Activated T-helper 1 cell treated with anti-CD3 and anti-CD28 coated beads, Interleukin-12 subunit alpha, Interleukin-12 subunit beta, Interleukin-2, Interleukin-4 antibody, amounts not matched to agents 30 ng/mL and 10 ng/mL and 1 ng/mL, durations not matched to agents 14 hours and 24 hours and 36 hours (primary cell): ENCODE measurements at regions of chr3 and their contacts with region 1.

Region 1: GRCh38 chr3:14947886-14948555 is 638 bp downstream of the NR2C2 start:
- DNase-seq: peak; percentile 95
- H3K4me3 Mint-ChIP-seq: peak overlapping the region; percentile 97
- H3K27ac Mint-ChIP-seq: peak overlapping the region; percentile 100
- H3K4me1 Mint-ChIP-seq: peaks cover 36% of the 10 kb centered on the region
- H3K27me3 Mint-ChIP-seq: no peaks in the 10 kb centered on the region

Region 2: GRCh38 chr3:14124615-14125190 is 823.3 kb before region 1 on chr3 and contains the starts of genes CHCHD4 and TMEM43:
- intact Hi-C with region 1: loop called (anchors 1 kb)
- DNase-seq: peak; percentile 98
- H3K4me3 Mint-ChIP-seq: peak within 1 kb of the TSS; percentile 93
- H3K27ac Mint-ChIP-seq: peak within 1 kb of the TSS; percentile 96
- H3K4me1 Mint-ChIP-seq: peaks cover 67% of the 10 kb centered on the region
- H3K27me3 Mint-ChIP-seq: no peaks in the 10 kb centered on the region
- total RNA-seq, gene CHCHD4: 27.8 and 29.4 TPM in 2 replicates
- total RNA-seq, gene TMEM43: 40.4 and 41.3 TPM in 2 replicates

Region 3: DNA sequence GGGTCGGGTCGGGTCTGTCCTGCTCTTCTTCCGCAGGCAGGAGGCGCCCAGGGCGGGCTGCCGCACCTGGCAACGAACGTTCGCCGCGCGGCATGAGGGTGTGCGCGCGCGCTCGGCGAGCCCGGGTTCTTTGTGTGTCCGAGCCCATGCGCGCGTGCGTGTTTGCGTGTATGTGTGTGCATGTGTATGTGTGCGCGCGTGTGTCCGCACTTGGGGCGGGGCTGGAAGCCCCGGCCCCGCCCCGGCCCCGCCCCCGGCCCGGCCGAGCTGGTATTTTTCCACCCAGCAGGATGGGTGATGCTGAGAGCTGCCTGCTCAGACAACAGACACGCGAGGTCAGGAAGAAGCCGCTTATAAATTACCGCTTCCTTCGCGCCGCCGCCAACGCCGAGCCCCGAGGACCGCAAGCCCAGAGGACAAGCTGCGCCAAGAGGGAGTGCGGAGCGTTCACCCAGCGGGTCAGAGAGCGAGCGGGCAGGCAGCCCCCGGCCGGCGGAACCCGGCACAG is 545.7 kb before region 1 on chr3 and contains the start of gene SLC6A6:
- intact Hi-C with region 1: loop called (anchors 1 kb)
- DNase-seq: peak; percentile 92
- H3K4me3 Mint-ChIP-seq: peak within 1 kb of the TSS; percentile 97
- H3K27ac Mint-ChIP-seq: peak within 1 kb of the TSS; percentile 96
- H3K4me1 Mint-ChIP-seq: peaks cover 42% of the 10 kb centered on the region
- H3K27me3 Mint-ChIP-seq: peaks cover 3% of the 10 kb centered on the region
- total RNA-seq, gene SLC6A6: 45.4 and 51.2 TPM in 2 replicates

Region 4: DNA sequence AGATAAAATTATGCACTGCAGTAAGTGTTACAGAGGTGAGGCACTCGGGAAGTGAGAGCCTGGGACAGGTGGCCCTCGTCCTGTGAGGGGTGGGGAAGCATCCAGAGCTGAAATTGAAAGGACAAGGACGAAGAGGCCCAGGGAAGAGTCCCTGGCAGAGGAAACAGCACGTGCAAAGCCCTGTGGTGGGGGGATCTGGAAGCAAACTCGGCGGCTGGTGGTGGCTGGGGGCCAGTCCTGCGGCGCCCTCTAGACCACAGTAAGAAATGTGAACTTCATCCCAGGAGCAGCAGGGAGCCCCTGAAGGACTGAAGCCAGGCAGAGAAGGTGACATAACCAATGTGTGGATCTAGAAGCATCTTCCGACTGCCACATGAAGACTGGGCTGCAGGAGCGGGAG is 450.7 kb before region 1 on chr3:
- intact Hi-C with region 1: no loop called
- DNase-seq: no peak
- H3K4me3 Mint-ChIP-seq: no peak overlapping the region
- H3K27ac Mint-ChIP-seq: no peak overlapping the region
- H3K4me1 Mint-ChIP-seq: no peaks in the 10 kb centered on the region
- H3K27me3 Mint-ChIP-seq: peaks cover 4% of the 10 kb centered on the region

Region 5: DNA sequence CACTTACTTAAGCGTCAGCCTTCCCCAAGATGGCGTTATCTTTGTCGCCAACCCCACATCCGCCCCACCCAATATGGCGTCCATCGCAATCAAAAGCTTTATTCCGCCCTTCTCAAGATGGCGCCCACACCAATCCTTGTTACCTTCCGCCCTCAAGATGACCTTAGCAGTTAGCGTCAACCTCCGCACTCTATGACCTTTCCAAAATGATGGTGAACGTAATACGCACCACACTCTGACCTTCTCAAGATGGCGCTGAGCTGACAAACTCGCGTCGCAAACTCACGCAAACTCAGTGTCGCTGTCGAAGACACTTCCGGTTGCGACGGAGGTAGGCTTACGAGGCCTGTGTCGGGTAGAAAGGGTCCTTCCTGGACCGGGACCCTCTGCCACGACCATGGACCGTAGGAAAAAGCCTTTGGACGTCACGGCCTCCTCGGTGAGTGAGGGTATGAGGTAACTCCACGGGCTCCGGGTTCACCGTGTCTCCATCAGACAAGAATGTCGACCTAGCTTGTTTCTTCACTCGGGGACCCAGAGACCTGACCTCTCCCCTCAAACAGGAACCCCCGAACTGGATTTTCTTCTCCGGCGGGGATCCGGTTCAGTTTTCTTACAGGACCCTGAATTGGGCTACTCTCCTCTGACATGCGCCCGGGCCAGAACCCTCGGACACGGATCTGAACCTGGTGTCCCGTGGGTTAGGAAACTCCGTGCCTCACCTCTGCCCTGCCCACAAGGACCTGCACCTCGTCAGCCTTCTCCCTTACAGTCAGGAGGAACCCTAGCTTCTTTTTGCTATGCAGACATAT is 296.4 kb before region 1 on chr3 and contains the start of gene CCDC174:
- intact Hi-C with region 1: loop called (anchors 1 kb)
- DNase-seq: peak; percentile 94
- H3K4me3 Mint-ChIP-seq: peak within 1 kb of the TSS; percentile 99
- H3K27ac Mint-ChIP-seq: peak within 1 kb of the TSS; percentile 90
- H3K4me1 Mint-ChIP-seq: peaks cover 38% of the 10 kb centered on the region
- H3K27me3 Mint-ChIP-seq: peaks cover 4% of the 10 kb centered on the region
- total RNA-seq, gene CCDC174: 16.6 and 21.7 TPM in 2 replicates

Region 6: GRCh38 chr3:15023249-15023648 is 75.2 kb after region 1 on chr3:
- intact Hi-C with region 1: no loop called
- DNase-seq: no peak
- H3K4me3 Mint-ChIP-seq: no peak overlapping the region
- H3K27ac Mint-ChIP-seq: no peak overlapping the region
- H3K4me1 Mint-ChIP-seq: no peaks in the 10 kb centered on the region
- H3K27me3 Mint-ChIP-seq: no peaks in the 10 kb centered on the region

Region 7: DNA sequence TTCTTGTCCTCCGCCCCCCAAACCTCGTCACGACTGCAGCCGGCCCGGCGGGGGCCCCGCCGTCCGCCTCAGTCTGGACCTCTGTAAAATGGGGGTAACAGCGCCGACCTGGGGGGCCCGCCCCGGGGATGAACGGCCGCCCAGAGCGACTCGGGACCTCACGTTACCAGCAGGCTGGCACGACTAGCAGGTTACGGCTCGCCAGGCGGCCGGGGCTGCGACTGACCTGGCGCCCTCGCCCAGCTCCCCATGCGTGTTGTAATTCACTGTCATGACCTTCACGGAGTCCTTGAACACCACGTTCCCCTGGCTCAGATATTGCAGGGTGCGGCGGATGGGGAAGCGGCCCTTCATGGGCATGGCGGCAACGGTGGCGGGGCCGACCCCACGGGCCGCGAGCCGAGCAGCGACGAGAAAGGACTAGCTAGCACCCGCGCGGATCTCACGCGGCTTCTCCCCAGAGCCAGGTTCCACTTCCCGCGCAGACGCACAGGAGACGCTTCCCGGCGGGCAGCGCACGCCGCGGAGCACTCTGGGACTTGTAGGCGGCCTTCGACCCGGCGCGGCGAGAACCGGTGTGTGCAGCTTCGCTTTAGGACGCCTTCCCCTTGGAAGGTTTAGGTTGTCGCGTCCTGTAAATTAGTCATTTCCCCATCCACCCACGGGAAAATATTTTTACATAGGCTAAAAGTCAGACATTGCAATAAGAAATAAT is 117.0 kb after region 1 on chr3 and contains the start of gene MRPS25:
- intact Hi-C with region 1: loop called (anchors 1 kb)
- DNase-seq: peak; percentile 90
- H3K4me3 Mint-ChIP-seq: peak within 1 kb of the TSS; percentile 96
- H3K27ac Mint-ChIP-seq: peak within 1 kb of the TSS; percentile 95
- H3K4me1 Mint-ChIP-seq: peaks cover 20% of the 10 kb centered on the region
- H3K27me3 Mint-ChIP-seq: no peaks in the 10 kb centered on the region
- total RNA-seq, gene MRPS25: 96.5 and 105 TPM in 2 replicates

Region 8: GRCh38 chr3:15427182-15427880 is 479.3 kb after region 1 on chr3 and contains the starts of genes EAF1 and METTL6:
- intact Hi-C with region 1: loop called (anchors 5 kb)
- DNase-seq: peak; percentile 81
- H3K4me3 Mint-ChIP-seq: peak within 1 kb of the TSS; percentile 97
- H3K27ac Mint-ChIP-seq: peak within 1 kb of the TSS; percentile 96
- H3K4me1 Mint-ChIP-seq: peaks cover 61% of the 10 kb centered on the region
- H3K27me3 Mint-ChIP-seq: no peaks in the 10 kb centered on the region
- total RNA-seq, gene EAF1: 27.3 and 27.8 TPM in 2 replicates
- total RNA-seq, gene METTL6: 15.0 and 15.8 TPM in 2 replicates